Mammary epithelial cell (primary cell): ENCODE measurements at regions of chr17 and their contacts with region 1.

Region 1: GRCh38 chr17:71472809-71473789 is 647.7 kb upstream of the SOX9 start:
- DNase-seq: peak; percentile 63
- H3K4me3 ChIP-seq: no peak overlapping the region
- H3K27ac ChIP-seq: no peak overlapping the region
- H3K4me1 ChIP-seq: peaks cover 12% of the 10 kb centered on the region
- H3K27me3 ChIP-seq: no peaks in the 10 kb centered on the region
- CTCF ChIP-seq: peak; percentile 67 to 81

Region 2: DNA sequence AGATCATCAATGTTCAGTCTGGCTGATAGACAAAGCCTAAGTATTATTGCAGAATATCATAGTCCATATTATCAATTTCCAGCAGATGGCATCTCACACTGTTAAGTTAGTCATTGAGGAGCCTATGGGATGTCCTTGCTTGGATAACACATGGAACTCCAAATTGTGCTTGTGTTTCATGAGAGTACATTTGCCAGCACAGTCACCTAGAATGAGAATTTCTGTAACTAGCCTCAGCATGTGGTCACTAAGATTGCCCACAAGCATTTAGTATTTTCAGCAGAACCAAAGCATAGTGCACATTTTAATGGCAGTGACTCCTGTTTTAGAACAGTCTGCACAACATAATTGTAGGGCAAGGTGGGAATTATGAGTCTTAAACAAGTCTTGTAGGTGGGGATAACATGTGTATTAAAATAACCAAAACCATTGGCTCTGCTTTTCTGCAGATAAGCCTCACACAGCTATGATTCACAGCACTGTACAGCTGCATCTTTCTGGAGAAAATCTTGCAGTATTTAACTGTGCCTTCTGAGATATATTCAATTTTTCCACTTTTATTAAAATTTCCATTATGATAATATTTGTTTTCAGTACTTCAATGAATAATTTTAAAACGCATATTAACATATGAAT is 235.1 kb before region 1 on chr17:
- CTCF ChIA-PET with region 1: no interaction called
- dilution Hi-C with region 1: no loop called
- in situ Hi-C with region 1: loop called in 1 of 2 experiments (anchors 25 kb)
- intact Hi-C with region 1: loop called (anchors 1 kb)
- DNase-seq: peak; percentile 83
- H3K4me3 ChIP-seq: no peak overlapping the region
- H3K27ac ChIP-seq: no peak overlapping the region
- H3K4me1 ChIP-seq: peaks cover 9% of the 10 kb centered on the region
- H3K27me3 ChIP-seq: no peaks in the 10 kb centered on the region
- CTCF ChIP-seq: peak; percentile 49 to 57

Region 3: GRCh38 chr17:71572343-71572742 is 99.2 kb after region 1 on chr17:
- CTCF ChIA-PET with region 1: no interaction called
- dilution Hi-C with region 1: no loop called
- in situ Hi-C with region 1: no loop called
- intact Hi-C with region 1: loop called (anchors 2 kb)
- DNase-seq: peak; percentile 44
- H3K4me3 ChIP-seq: no peak overlapping the region
- H3K27ac ChIP-seq: no peak overlapping the region
- H3K4me1 ChIP-seq: peaks cover 4% of the 10 kb centered on the region
- H3K27me3 ChIP-seq: no peaks in the 10 kb centered on the region
- CTCF ChIP-seq: no peak

Region 4: DNA sequence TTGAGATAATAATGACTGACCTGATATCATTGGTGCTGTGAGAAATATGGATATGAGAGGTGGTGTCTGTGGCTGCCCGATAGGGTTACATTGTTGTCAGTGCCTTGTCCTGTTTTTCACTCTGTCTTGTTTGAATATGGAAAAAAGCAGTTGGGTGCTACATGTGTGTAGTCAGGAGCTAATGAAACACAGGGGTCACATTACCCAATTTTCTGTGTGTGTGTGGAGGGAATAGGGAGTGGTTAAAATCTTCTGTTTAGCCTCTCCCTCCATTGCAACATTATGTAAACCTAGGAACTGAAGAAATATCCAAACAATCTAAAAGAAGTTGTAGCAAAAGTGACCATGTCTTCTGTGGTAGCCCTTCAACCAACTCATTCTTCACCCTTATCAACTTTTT is 120.0 kb after region 1 on chr17:
- CTCF ChIA-PET with region 1: no interaction called
- dilution Hi-C with region 1: no loop called
- in situ Hi-C with region 1: no loop called
- intact Hi-C with region 1: no loop called
- DNase-seq: no peak
- H3K4me3 ChIP-seq: no peak overlapping the region
- H3K27ac ChIP-seq: no peak overlapping the region
- H3K4me1 ChIP-seq: no peaks in the 10 kb centered on the region
- H3K27me3 ChIP-seq: no peaks in the 10 kb centered on the region
- CTCF ChIP-seq: no peak

Region 5: DNA sequence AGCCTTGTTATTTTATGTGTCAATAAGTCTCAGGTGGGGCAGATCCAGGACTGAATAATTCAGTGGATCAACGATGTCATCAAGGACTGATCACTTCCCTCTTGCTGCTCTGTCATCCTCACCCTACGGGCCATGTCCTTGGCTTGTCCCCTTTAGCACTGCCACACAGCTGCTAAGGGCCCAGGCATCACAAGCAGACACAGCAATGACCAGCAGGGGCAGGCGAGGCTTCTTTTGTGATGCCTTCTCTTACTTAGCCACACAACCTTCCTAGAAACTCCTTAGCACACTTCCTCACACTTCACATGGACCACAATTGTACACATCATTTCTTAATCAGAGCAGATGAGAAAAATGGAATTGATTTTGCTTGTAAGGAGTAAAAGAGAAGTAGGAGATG is 291.4 kb after region 1 on chr17:
- CTCF ChIA-PET with region 1: no interaction called
- dilution Hi-C with region 1: no loop called
- in situ Hi-C with region 1: no loop called
- intact Hi-C with region 1: loop called (anchors 1 kb)
- DNase-seq: no peak
- H3K4me3 ChIP-seq: no peak overlapping the region
- H3K27ac ChIP-seq: no peak overlapping the region
- H3K4me1 ChIP-seq: no peaks in the 10 kb centered on the region
- H3K27me3 ChIP-seq: no peaks in the 10 kb centered on the region
- CTCF ChIP-seq: peak; percentile 24 to 44

Region 6: GRCh38 chr17:72056727-72057290 is 583.7 kb after region 1 on chr17:
- CTCF ChIA-PET with region 1: no interaction called
- dilution Hi-C with region 1: no loop called
- in situ Hi-C with region 1: no loop called
- intact Hi-C with region 1: loop called (anchors 2 kb)
- DNase-seq: peak; percentile 68
- H3K4me3 ChIP-seq: peak overlapping the region in 1 of 3 experiments; percentile 13
- H3K27ac ChIP-seq: no peak overlapping the region
- H3K4me1 ChIP-seq: peaks cover 42% of the 10 kb centered on the region
- H3K27me3 ChIP-seq: no peaks in the 10 kb centered on the region
- CTCF ChIP-seq: peak in 1 of 2 donors; percentile 41